Activated T-helper 2 cell treated with anti-CD3 and anti-CD28 coated beads, Interferon-gamma antibody, Interleukin-2, Interleukin-4, amounts not matched to agents 10 μg/mL and 5 μg/mL and 100 μg/mL, durations not matched to agents 14 hours and 24 hours and 36 hours (primary cell): ENCODE measurements at regions of chr5 and their contacts with region 1.

Region 1: DNA sequence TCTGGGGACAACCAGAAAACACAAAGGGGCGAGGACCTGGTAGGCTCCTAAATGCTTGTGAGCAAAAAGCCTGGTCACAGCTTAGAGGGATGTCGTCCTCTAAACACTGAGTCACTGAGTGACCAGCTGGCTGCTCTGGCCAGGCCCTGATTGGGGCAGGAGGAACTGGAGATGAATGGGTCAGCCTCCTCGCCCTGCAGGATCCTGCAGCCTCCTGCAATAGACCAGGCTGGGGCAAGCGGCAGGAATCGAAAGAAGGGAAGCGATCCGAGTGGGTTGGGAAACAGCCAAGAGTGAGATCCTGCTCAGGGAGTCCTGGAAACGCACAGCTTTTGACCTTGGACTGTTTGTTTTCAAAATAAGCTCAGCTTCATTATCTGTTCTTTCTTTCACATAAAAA is 34.1 kb upstream of the MSX2 start:
- DNase-seq: no peak
- H3K4me3 Mint-ChIP-seq: no peak overlapping the region
- H3K27ac Mint-ChIP-seq: no peak overlapping the region
- H3K4me1 Mint-ChIP-seq: peaks cover 4% of the 10 kb centered on the region
- H3K27me3 Mint-ChIP-seq: peaks cover 66% of the 10 kb centered on the region

Region 2: GRCh38 chr5:174381241-174381640 is 309.0 kb before region 1 on chr5:
- intact Hi-C with region 1: no loop called
- DNase-seq: no peak
- H3K4me3 Mint-ChIP-seq: no peak overlapping the region
- H3K27ac Mint-ChIP-seq: no peak overlapping the region
- H3K4me1 Mint-ChIP-seq: no peaks in the 10 kb centered on the region
- H3K27me3 Mint-ChIP-seq: no peaks in the 10 kb centered on the region

Region 3: DNA sequence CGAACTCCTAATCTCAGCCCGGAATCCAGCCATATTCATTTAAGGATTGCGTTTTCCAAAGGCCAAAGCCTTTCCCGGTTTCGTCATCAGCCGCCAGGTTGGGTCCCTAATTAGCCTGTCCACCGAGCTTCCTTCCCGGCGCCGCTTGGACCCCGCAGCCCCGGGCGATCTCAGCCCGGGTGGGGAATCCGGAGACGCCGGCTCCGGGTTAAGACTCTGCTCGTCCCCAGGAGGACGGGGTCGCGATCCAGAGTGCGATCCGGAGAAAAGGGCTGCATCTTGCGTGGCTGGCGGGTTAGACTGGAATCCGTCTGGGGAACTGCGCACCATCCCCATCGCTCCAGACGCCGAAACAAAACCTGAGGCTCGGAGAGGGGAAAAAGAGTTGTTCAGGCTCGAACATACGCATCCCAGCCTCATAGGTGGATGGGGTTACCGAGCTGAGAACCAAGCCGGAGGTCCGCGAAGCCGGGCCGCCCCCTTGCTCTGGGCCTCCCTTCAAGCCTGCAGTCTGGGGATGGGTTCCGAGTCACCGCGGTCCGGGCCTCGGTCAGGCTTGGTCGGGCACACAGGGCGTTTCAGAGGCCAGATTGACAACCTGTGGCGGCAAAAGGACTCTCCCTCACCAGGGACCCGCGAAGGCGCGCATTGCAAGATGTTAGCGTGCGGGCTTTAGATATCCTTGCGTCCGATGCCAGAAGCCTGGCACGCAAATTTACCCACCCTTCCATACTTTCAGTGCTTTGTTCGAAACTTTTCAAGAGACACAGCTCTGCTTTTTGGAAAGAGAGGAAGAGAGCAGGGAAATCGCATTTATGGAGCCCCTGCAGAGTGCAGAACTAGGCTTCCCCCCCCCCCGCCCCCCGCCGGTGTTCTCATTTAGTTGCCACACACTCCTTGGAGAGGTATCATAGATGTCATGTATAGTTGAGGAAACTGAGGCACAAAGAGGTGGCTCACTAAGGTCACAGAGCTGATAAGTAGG is 42.1 kb after region 1 on chr5:
- intact Hi-C with region 1: loop called (anchors 5 kb)
- DNase-seq: no peak
- H3K4me3 Mint-ChIP-seq: no peak overlapping the region
- H3K27ac Mint-ChIP-seq: no peak overlapping the region
- H3K4me1 Mint-ChIP-seq: peaks cover 3% of the 10 kb centered on the region
- H3K27me3 Mint-ChIP-seq: peaks cover 87% of the 10 kb centered on the region

Region 4: GRCh38 chr5:174843263-174844250 is 153.3 kb after region 1 on chr5:
- intact Hi-C with region 1: no loop called
- DNase-seq: no peak
- H3K4me3 Mint-ChIP-seq: no peak overlapping the region
- H3K27ac Mint-ChIP-seq: no peak overlapping the region
- H3K4me1 Mint-ChIP-seq: no peaks in the 10 kb centered on the region
- H3K27me3 Mint-ChIP-seq: no peaks in the 10 kb centered on the region